ENCODE measurements at regions of chr4 and their contacts with region 1.

Region 1: DNA sequence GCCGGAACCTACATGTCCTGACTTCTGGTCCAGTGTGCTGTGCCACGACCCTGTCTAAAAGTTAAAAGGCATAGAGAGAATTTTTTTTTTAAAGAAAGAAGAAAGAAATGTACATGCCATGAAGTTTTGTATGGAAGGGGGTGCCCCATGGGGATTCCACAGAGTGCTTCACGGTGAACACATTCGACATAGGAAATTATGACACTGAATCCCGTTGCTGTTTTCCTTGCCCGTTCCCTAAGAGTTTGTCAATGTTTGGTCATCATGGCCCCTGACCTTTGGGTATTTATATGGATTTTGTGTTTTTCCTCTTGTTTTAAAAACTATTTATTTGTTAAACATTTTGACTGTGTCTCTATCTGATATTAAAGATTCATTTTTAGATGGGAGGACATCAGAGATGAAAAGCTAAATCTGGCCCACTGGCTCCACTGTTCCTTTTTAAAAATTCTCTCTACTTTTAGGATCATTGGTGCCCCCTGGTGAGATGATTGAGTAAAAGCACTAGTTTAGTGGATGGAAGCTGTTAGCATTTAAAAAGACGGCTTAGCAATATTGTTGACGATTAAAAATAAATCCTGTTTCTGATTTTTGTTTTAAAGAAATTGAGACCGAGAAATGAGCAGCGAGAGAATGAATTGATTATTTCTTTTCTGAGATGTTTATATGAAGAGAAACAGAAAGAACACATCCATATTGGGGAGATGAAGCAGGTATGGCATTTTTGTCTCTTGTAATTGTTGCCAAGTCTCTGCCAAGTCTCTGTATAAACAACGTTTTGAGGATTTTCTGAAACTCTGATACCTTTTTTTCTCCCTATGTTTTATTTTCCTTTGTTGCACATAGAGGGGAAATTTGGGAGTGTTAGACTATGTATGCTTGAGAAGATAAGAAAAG is 75.0 kb downstream of the PTTG2 start:
- DNase-seq: peak in 1 of 2 donors; percentile 79
- ATAC-seq: peak; percentile 57 to 80 (median 69)
- H3K4me3 ChIP-seq: no peak overlapping the region
- H3K4me3 Mint-ChIP-seq: no peak overlapping the region
- H3K27ac ChIP-seq: no peak overlapping the region
- H3K27ac Mint-ChIP-seq: no peak overlapping the region
- H3K4me1 ChIP-seq: no peaks in the 10 kb centered on the region
- H3K4me1 Mint-ChIP-seq: peaks cover 0 to 6% of the 10 kb centered on the region in 2 donors
- H3K27me3 ChIP-seq: no peaks in the 10 kb centered on the region
- H3K27me3 Mint-ChIP-seq: no peaks in the 10 kb centered on the region
- CTCF ChIP-seq: peak; percentile 88

Region 2: GRCh38 chr4:37803356-37803973 is 231.8 kb before region 1 on chr4:
- intact Hi-C with region 1: loop called (anchors 1 kb)
- DNase-seq: peak in 1 of 2 donors; percentile 79
- ATAC-seq: peak in 2 of 3 donors; percentile 62
- H3K4me3 ChIP-seq: no peak overlapping the region
- H3K4me3 Mint-ChIP-seq: no peak overlapping the region
- H3K27ac ChIP-seq: no peak overlapping the region
- H3K27ac Mint-ChIP-seq: no peak overlapping the region
- H3K4me1 ChIP-seq: no peaks in the 10 kb centered on the region
- H3K4me1 Mint-ChIP-seq: no peaks in the 10 kb centered on the region
- H3K27me3 ChIP-seq: no peaks in the 10 kb centered on the region
- H3K27me3 Mint-ChIP-seq: peaks cover 0 to 7% of the 10 kb centered on the region in 2 donors
- CTCF ChIP-seq: peak; percentile 78